ENCODE measurements at regions of chr7 and their contacts with region 1.

Region 1: GRCh38 chr7:35723011-35723410 is 28.1 kb upstream of the HERPUD2 start:
- DNase-seq: no peak
- H3K4me3 Mint-ChIP-seq: peak overlapping the region; percentile 29
- H3K27ac Mint-ChIP-seq: peak overlapping the region; percentile 91
- H3K4me1 Mint-ChIP-seq: peaks cover 62% of the 10 kb centered on the region
- H3K27me3 Mint-ChIP-seq: no peaks in the 10 kb centered on the region

Region 2: DNA sequence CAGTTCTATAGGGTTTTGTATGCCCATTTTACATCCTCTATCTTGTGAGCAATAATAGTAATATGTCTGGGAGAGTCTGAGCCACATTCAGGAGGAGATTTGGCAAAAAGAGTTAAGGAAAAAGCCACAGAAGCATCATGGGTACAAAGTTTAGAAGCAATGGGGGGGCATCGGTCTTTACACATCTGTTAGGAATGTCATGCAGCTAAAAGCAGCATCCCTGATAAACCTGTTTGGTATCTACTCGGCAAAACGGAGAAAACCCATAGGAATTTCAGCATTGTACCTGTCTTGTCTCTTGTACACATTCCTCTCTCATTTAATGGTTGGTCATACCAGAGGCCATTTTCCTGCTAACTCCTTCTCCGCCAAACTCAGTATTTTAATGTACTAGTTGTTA is 15.6 kb before region 1 on chr7:
- CTCF ChIA-PET with region 1: interaction called, 10 read pairs
- POLR2A ChIA-PET with region 1: interaction called, 3 read pairs
- intact Hi-C with region 1: loop called (anchors 1 kb)
- DNase-seq: no peak
- H3K4me3 Mint-ChIP-seq: no peak overlapping the region
- H3K27ac Mint-ChIP-seq: no peak overlapping the region
- H3K4me1 Mint-ChIP-seq: peaks cover 8% of the 10 kb centered on the region
- H3K27me3 Mint-ChIP-seq: no peaks in the 10 kb centered on the region

Region 3: DNA sequence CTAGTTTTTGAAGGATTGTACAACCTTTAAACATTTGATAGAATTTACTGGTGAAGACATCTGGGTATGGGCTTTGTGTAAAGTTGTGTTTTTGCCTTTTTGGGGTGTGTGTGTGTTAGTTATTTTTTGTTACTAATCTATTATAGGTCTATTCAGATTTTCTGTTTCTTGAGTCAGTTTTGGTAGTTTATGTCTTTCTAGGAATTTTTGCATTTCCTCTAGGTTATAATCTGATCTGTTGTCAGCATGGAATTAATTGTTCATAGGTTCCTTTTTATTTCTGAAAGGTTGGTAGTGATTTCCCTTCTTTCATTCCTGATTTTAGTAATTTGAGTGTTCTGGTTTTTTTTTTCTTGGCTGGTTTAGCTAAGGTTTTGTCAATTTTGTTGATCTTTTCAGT is 95.5 kb after region 1 on chr7:
- CTCF ChIA-PET with region 1: no interaction called
- POLR2A ChIA-PET with region 1: no interaction called
- intact Hi-C with region 1: loop called (anchors 1 kb)
- DNase-seq: no peak
- H3K4me3 Mint-ChIP-seq: peak overlapping the region; percentile 16
- H3K27ac Mint-ChIP-seq: peak overlapping the region; percentile 72
- H3K4me1 Mint-ChIP-seq: peaks cover 70% of the 10 kb centered on the region
- H3K27me3 Mint-ChIP-seq: no peaks in the 10 kb centered on the region

Measured in activated CD4-positive, alpha-beta memory T cell treated with anti-CD3 and anti-CD28 coated beads for 36 hours (primary cell).